ENCODE measurements at regions of chr18 and their contacts with region 1.

Region 1: GRCh38 chr18:48922801-48923730 is 27.7 kb downstream of the SMAD7 start:
- DNase-seq: peak; percentile 43
- H3K4me3 ChIP-seq: peak overlapping the region in 2 of 3 experiments; percentile 15 to 26
- H3K27ac ChIP-seq: no peak overlapping the region
- H3K4me1 ChIP-seq: peaks cover 33% of the 10 kb centered on the region
- H3K27me3 ChIP-seq: no peaks in the 10 kb centered on the region
- CTCF ChIP-seq: no peak

Region 2: GRCh38 chr18:49013961-49014655 is 91.0 kb after region 1 on chr18:
- CTCF ChIA-PET with region 1: no interaction called
- dilution Hi-C with region 1: loop called (anchors 5 kb)
- in situ Hi-C with region 1: no loop called
- intact Hi-C with region 1: no loop called
- DNase-seq: no peak
- H3K4me3 ChIP-seq: no peak overlapping the region
- H3K27ac ChIP-seq: no peak overlapping the region
- H3K4me1 ChIP-seq: peaks cover 18% of the 10 kb centered on the region
- H3K27me3 ChIP-seq: no peaks in the 10 kb centered on the region
- CTCF ChIP-seq: no peak

Region 3: DNA sequence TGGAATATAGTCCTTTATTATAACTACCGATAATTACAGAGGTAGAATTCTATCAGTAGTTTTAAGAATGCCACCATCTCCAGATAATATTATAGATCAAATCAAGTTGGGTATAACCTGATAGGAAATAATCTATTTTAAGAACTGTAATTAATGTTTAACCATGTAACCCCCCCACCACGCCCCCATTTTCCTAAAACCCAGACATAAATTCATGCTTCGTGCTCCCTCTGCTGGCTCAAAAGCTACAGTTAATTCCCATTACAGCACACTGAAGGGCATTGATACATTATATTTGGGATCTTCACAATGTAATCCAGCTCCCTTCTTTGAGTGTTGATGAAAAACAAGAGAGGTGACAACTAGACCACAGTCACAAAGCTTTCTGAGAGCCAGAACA is 255.7 kb after region 1 on chr18:
- CTCF ChIA-PET with region 1: interaction called, 28 read pairs
- dilution Hi-C with region 1: no loop called
- in situ Hi-C with region 1: no loop called
- intact Hi-C with region 1: no loop called
- DNase-seq: no peak
- H3K4me3 ChIP-seq: no peak overlapping the region
- H3K27ac ChIP-seq: no peak overlapping the region
- H3K4me1 ChIP-seq: peaks cover 5% of the 10 kb centered on the region
- H3K27me3 ChIP-seq: no peaks in the 10 kb centered on the region
- CTCF ChIP-seq: peak; percentile 52 to 64

Measured in mammary epithelial cell (primary cell).